ENCODE measurements at regions of chr5 and their contacts with region 1.

Region 1: DNA sequence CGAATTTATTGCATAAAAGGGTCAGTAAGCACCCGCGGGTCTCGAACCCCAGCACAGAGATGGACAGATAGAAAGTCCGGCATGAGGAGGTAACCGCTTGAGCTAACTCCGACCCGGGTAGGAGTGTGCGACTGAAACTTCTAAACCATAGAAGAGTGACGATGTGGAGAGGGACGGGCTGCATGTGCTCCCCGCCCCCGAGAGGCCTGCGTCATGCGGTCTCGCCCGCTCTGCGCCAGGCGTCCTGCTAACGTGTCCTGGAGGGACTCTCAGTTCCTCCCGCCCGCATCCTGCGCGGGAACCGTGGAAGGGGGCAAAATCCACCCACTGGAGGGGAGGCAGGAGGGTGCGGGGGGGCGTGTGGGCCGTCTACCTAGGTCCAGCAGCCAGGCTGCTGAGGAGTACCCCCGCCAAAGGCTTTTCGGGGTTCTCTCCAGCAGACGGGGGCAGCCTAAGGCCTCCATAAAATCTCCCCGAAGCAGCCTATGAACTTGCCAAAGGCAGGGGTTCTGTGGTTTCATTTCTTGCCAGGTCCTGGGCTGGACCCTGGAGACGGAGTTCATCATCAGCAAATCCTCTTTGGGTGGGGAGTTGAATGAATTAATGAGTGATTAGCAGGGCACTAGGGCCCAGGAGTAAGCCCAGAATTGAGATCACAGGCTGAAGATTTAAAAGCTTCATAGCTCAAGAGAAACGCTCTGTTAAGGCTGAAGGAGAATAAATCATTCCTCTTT is 51.9 kb downstream of the TGFBI start:
- DNase-seq: peak; percentile 47 to 72
- H3K4me3 ChIP-seq: peak overlapping the region; percentile 57 to 67 (median 62)
- H3K27ac ChIP-seq: no peak overlapping the region
- H3K4me1 ChIP-seq: no peaks in the 10 kb centered on the region
- H3K27me3 ChIP-seq: peaks cover 0 to 4% (median 0%) of the 10 kb centered on the region in 4 experiments; a peak in 3 of 7 replicates
- CTCF ChIP-seq: no peak
- EP300 ChIP-seq: no peak
- POLR2A ChIP-seq: peak; percentile 61 to 66; a peak in 2 of 3 replicates
- RAD21 ChIP-seq: no peak

Region 2: DNA sequence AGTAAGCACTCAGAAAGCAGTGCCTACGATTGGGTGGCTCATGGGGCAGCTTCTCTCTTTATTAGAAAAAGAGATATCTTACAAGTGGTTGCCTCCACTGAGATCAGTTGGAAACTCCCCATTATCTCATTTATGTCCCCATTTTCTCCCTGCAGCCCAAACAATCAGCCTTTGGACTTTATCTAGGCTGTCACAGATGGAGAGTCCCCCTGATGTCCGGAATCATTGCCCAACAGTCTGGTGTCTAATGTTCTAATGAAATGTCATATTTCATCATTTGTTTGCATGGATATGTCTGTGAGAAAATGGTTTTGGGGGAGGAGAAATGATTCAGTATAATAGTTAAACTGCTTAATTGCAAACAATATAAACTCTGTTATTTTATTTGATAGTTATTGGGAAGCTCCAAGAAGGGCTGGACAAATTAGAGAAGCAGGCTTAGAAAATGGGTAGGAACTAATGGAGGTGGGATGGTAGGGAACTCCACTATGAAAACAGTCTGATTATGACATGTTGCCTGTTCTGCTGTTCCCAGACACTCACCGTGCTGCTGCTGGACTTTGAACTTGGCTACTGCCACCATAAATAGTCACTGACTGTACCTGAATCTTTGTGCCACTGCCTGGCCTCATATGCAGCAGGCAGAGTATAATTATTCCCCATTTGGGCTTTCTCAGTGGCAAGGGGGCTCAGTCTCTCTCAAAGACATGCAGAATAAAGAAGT is 13.7 kb after region 1 on chr5:
- CTCF ChIA-PET with region 1: interaction called, 46 read pairs
- POLR2A ChIA-PET with region 1: no interaction called
- DNase-seq: no peak
- H3K4me3 ChIP-seq: no peak overlapping the region
- H3K27ac ChIP-seq: no peak overlapping the region
- H3K4me1 ChIP-seq: peaks cover 3 to 6% (median 4%) of the 10 kb centered on the region in 4 experiments; a peak in 4 of 7 replicates
- H3K27me3 ChIP-seq: no peaks in the 10 kb centered on the region
- CTCF ChIP-seq: no peak
- EP300 ChIP-seq: no peak
- POLR2A ChIP-seq: no peak
- RAD21 ChIP-seq: no peak

Region 3: DNA sequence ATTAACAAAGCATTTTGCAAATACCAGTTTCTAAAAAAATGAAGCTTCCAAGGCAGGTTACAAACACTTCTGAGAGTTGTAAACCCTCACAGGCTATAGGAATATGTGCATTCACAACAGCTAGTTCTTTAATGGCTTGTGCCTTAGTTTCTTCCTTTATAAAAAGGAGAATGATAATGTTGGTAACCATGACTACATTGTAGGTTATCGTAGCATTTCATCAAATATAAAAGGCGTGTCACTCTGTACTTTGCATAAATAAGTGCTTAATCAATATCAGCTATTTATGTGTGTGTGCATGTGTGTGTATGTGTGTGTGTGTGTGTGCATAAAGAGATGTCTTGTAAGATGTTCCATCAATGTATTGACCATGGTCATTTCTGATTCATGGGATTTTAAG is 43.7 kb after region 1 on chr5:
- CTCF ChIA-PET with region 1: interaction called, 11 read pairs
- POLR2A ChIA-PET with region 1: no interaction called
- DNase-seq: no peak
- H3K4me3 ChIP-seq: no peak overlapping the region
- H3K27ac ChIP-seq: no peak overlapping the region
- H3K4me1 ChIP-seq: no peaks in the 10 kb centered on the region
- H3K27me3 ChIP-seq: no peaks in the 10 kb centered on the region; a peak in 1 of 7 replicates
- CTCF ChIP-seq: no peak
- EP300 ChIP-seq: no peak
- POLR2A ChIP-seq: no peak
- RAD21 ChIP-seq: no peak

Measured in H1 (cell line).